Posterior vena cava (tissue), 2 donors: ENCODE measurements at regions of chr3 and their contacts with region 1.

Region 1: GRCh38 chr3:149273096-149273751 is 51.6 kb upstream of the CP start:
- DNase-seq: no peak

Region 2: DNA sequence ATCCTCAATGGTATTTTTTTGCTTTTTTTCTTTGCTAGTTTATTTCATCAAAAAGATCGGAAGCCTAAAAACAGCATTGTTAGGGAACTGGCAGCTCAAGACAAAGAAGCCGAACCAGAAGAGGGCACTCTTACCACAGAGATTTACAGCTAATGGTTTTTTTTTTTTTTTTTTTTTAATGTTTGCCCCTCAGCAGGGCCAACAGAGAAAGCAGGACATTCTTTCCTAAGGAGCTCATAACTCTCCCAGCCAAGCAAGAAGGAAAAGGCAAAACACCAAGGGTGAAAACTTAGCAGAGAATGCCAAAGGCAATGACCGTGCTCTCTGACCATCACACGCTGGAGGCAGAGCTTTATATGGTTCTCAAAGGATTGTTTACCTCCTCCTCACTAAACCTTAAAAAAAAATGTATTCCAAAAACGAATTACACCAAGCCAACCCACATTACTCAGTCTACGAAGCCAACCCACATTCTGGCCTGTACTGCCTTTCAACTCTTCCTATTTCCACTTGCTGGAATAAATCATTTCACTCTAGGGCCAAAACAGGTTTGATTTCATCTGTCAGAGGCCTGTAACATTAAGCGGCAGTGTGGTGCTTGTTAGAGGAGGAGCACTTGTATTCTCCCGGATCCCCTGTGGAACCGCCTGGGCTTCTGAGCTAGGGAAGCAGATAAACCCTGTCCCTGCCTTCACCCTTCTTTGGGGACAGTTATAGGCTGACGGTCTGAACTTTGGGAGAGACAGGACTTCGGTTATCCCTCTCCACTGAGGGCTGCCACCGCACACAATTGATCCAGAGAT is 317.5 kb before region 1 on chr3:
- intact Hi-C with region 1: loop called (anchors 10 kb)
- DNase-seq: no peak

Region 3: GRCh38 chr3:148962513-148962912 is 310.7 kb before region 1 on chr3:
- intact Hi-C with region 1: loop called (anchors 10 kb)
- DNase-seq: no peak

Region 4: DNA sequence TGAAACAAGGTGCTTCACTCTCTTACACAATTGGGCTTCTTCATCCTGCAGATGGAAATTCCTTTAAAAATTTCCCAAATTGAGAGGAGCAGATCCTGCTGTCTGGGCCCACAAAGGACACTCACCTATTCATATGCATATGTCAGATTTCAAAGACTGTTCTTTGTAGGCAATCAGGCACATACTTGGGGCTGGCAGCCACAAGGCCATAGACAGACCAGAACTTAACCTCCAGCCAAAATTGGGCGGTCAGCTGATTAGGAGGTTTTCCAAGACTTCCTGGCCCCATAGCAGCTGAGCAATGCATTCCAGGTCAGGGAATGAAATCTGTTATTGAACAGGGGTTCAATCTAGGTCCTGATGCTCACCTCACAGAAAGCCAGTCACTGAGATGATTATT is 158.8 kb before region 1 on chr3:
- intact Hi-C with region 1: loop called in 1 of 2 experiments (anchors 5 kb)
- DNase-seq: no peak

Region 5: DNA sequence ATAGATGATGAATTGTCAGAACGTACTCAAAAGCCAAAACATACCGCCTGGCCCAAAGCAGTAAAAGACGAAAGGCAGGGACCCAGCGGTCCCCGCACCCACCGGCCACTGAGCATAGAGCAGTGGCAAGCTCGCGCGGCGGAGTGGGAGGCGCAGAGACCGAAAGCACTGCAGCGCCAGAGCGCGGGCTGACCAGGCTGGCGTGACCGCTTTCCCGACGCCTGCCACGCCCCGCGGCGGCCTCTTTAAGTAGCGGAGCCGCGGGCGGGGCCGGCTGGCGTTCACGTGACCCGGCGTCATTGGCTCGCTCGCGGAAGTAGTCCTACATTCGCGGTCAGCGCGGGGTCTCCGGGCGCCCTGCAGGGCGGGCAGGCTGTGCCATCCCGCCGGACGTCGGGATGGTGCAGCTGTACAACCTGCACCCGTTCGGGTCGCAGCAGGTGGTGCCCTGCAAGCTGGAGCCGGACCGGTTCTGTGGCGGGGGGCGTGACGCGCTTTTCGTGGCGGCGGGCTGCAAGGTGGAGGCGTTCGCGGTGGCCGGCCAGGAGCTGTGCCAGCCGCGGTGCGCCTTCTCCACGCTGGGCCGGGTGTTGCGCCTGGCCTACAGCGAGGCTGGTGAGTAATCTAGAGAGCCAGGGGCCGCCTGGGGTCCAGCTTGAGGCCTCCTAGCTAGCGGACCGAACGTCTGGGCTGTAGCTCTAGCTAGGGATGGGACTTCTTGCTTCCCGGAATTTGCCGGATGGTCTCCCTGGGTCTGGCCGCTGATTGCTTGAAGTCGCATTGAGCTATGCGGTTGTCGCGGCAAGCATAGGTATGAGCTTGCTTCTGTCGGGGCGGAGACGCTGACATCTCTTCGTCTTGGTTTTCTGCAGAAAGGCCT is 143.7 kb before region 1 on chr3 and contains the start of gene HPS3:
- intact Hi-C with region 1: loop called in 1 of 2 experiments (anchors 10 kb)
- DNase-seq: peak; percentile 98
- total RNA-seq, gene HPS3: 14.5 to 16.3 TPM